ENCODE measurements at regions of chr7 and their contacts with region 1.

Region 1: GRCh38 chr7:94394399-94395140 is at the start of gene COL1A2:
- DNase-seq: peak; percentile 34 to 70 (median 55)
- H3K4me3 ChIP-seq: peak within 1 kb of the TSS in 2 of 4 donors; percentile 21 to 47
- H3K27ac ChIP-seq: peak within 1 kb of the TSS in 3 of 5 donors; percentile 54 to 89 (median 75)
- H3K4me1 ChIP-seq: peaks cover 5 to 11% of the 10 kb centered on the region in 2 donors
- H3K27me3 ChIP-seq: no peaks in the 10 kb centered on the region
- CTCF ChIP-seq: no peak
- POLR2A ChIP-seq: no peak
- total RNA-seq, gene COL1A2: 110 to 475 (median 192) TPM

Region 2: GRCh38 chr7:94170836-94171235 is 223.7 kb before region 1 on chr7:
- intact Hi-C with region 1: no loop called
- DNase-seq: no peak
- H3K4me3 ChIP-seq: no peak overlapping the region
- H3K27ac ChIP-seq: no peak overlapping the region
- H3K4me1 ChIP-seq: no peaks in the 10 kb centered on the region
- H3K27me3 ChIP-seq: no peaks in the 10 kb centered on the region
- CTCF ChIP-seq: no peak
- POLR2A ChIP-seq: no peak

Region 3: GRCh38 chr7:94295850-94296249 is 98.7 kb before region 1 on chr7:
- intact Hi-C with region 1: loop called (anchors 5 kb)
- DNase-seq: peak in 1 of 7 donors; percentile 14
- H3K4me3 ChIP-seq: no peak overlapping the region
- H3K27ac ChIP-seq: peak overlapping the region in 1 of 5 donors; percentile 43
- H3K4me1 ChIP-seq: peaks cover 3 to 26% of the 10 kb centered on the region in 2 donors
- H3K27me3 ChIP-seq: no peaks in the 10 kb centered on the region
- CTCF ChIP-seq: peak; percentile 25 to 71 (median 62)
- POLR2A ChIP-seq: no peak

Measured in adrenal gland (tissue), 19 donors.